Calu3 (cell line): ENCODE measurements at regions of chr17 and their contacts with region 1.

Region 1: DNA sequence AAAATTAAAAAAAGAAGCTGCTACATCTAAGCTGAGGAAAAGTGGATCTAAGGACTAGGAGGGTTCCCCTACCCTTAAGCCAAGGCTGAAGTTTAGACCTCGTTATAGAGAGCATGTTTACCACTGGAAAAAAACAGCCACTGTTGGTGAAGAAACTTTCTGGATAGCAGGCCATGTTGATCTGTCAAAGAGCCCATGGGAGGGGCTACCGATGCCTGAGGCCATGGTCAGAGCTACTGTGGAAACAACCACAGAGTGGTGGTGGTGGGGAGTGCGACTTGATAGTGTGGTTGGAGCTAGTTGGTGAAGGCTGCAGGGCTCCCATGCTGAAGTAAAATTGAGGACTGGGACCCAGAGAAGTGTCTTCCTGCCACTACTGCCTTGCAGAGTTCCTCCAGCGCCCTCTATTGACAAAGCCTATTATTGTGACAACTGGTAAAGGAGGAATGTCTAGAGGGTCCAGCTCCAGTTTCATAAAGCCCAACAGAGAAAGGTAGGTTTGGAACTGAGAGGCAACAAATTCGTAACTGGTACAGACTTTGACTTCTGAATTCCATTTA is 12.7 kb upstream of the FAM20A start:
- DNase-seq: peak; percentile 54
- H3K4me3 Mint-ChIP-seq: no peak overlapping the region
- H3K27ac Mint-ChIP-seq: no peak overlapping the region
- H3K4me1 Mint-ChIP-seq: no peaks in the 10 kb centered on the region
- H3K27me3 Mint-ChIP-seq: peaks cover 11% of the 10 kb centered on the region
- CTCF ChIP-seq: peak; percentile 50

Region 2: DNA sequence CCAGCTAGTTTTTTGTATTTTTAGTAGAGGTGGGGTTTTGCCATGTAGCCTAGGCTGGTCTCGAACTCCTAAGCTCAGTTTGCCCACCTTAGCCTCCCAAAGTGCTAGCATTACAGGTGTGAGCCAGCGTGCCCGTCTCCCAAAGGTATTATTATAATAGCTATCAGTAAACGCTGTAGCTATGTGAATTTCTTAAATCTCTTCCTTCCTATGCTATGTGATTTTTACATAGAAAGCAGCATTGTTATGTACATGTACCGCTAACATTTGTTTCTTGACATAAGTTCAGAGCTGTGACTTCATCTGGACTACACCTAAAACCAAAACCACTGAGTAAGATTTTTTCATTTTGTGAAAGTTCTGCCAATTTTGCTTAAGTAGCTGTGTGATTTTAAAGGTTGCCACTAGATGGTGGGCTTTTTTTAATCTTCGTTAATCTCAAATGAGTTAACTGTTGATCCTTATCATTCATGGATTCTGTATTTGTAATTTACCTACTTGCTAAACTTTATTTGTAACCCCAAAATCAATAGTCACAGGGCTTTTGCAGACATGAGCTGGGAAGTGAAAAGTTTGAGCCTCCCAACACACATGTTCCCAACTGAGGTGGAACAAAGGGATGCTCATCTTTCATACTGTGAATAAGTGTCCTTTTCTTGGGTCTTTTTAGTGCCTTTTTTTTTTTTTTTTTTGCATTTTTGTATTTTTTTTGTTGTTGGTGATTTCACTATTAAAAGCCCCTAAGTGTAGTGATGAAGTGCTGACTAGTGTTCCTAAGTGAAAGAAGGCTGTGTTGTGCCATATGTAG is 79.7 kb before region 1 on chr17:
- CTCF ChIA-PET with region 1: interaction called, 5 read pairs
- intact Hi-C with region 1: loop called (anchors 5 kb)
- DNase-seq: no peak
- H3K4me3 Mint-ChIP-seq: no peak overlapping the region
- H3K27ac Mint-ChIP-seq: no peak overlapping the region
- H3K4me1 Mint-ChIP-seq: no peaks in the 10 kb centered on the region
- H3K27me3 Mint-ChIP-seq: no peaks in the 10 kb centered on the region
- CTCF ChIP-seq: no peak

Region 3: GRCh38 chr17:68697850-68698361 is 84.1 kb after region 1 on chr17:
- CTCF ChIA-PET with region 1: interaction called, 10 read pairs
- intact Hi-C with region 1: no loop called
- DNase-seq: no peak
- H3K4me3 Mint-ChIP-seq: no peak overlapping the region
- H3K27ac Mint-ChIP-seq: no peak overlapping the region
- H3K4me1 Mint-ChIP-seq: no peaks in the 10 kb centered on the region
- H3K27me3 Mint-ChIP-seq: no peaks in the 10 kb centered on the region
- CTCF ChIP-seq: no peak